Endothelial cell of umbilical vein (primary cell): ENCODE measurements at regions of chr19 and their contacts with region 1.

Region 1: GRCh38 chr19:1039646-1040475 is at the start of gene ABCA7:
- DNase-seq: peak; percentile 98
- H3K4me3 ChIP-seq: peak within 1 kb of the TSS; percentile 6 to 51 (median 51)
- H3K27ac ChIP-seq: no peak within 1 kb of the TSS
- H3K4me1 ChIP-seq: peaks cover 25% of the 10 kb centered on the region
- H3K27me3 ChIP-seq: no peaks in the 10 kb centered on the region
- CTCF ChIP-seq: no peak
- POLR2A ChIP-seq: peak; percentile 44
- total RNA-seq, gene ABCA7: 9.8 and 11.0 TPM in 2 replicates

Region 2: DNA sequence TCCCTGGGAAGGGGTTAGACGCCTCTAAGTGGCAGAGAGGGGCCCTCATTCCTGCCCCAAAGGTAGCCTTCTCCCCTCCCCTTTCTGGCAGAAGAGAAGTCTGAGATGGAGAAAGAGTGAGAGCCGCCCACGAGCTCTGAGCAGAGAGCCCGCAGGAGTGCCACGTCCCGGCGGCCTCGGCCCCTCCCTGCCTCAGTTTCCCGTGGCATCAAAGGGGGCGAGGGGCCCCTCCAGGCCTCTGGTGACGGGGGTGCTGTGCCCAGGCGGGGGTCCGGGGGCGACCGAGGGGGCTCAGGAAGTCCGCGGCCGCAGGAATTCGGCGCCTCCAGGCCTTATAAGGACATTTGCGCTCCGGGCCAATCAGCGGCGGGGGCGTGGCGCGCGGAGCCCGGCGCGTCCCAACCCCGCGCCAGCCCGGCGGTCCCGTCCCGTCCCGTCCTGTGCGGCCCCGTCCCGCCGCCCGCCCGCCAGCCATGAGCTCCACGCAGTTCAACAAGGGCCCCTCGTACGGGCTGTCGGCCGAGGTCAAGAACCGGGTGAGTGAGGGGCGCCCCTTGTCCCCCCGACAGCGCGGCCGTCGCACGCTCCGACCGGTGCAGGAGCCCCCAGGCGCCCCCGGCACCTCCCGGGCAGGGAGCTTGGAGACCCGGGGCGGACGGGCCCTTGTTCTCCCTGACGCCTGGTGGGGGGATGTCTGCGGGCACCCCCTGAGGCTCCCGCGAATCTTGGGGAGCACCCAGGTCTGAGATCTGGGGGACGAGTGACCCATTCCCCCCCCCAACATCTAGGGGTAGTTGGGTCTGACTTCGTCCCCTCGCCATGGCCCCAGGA is 13.5 kb before region 1 on chr19 and contains the start of gene CNN2:
- CTCF ChIA-PET with region 1: interaction called, 8 read pairs
- POLR2A ChIA-PET with region 1: interaction called, 36 read pairs
- dilution Hi-C with region 1: no loop called
- intact Hi-C with region 1: no loop called
- DNase-seq: peak; percentile 80
- H3K4me3 ChIP-seq: peak within 1 kb of the TSS; percentile 52 to 88 (median 84)
- H3K27ac ChIP-seq: peak within 1 kb of the TSS; percentile 70
- H3K4me1 ChIP-seq: peaks cover 9% of the 10 kb centered on the region
- H3K27me3 ChIP-seq: no peaks in the 10 kb centered on the region
- CTCF ChIP-seq: no peak
- POLR2A ChIP-seq: peak; percentile 83
- total RNA-seq, gene CNN2: 280 and 286 TPM in 2 replicates

Region 3: DNA sequence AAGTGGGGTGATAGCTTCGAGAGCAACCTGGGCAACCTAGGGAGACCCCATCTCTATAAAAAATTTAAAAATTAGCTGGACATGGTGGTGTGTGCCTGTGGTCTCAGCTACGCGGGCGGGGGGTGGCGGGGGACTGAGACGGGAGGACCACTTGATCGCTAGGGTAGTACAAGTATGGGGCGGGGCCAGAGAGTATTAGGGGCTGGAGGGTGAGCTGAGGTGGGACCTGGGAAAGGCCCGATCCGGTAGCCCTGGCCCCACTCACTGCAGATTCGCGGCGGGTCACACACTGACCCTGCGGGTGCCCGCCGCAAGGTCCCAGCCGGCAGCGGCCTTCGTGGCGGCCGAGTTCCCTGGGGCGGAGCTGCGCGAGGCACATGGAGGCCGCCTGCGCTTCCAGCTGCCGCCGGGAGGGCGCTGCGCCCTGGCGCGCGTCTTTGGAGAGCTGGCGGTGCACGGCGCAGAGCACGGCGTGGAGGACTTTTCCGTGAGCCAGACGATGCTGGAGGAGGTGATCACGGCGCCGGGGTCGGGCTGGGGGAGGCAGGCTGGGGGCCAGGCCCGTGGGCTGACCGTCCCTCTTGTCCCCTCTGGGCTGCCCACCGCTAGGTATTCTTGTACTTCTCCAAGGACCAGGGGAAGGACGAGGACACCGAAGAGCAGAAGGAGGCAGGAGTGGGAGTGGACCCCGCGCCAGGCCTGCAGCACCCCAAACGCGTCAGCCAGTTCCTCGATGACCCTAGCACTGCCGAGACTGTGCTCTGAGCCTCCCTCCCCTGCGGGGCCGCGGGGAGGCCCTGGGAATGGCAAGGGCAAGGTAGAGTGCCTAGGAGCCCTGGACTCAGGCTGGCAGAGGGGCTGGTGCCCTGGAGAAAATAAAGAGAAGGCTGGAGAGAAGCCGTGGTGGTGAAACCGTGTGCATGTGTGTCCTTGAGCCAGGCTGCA is 25.1 kb after region 1 on chr19:
- CTCF ChIA-PET with region 1: interaction called, 10 read pairs
- POLR2A ChIA-PET with region 1: no interaction called
- dilution Hi-C with region 1: no loop called
- intact Hi-C with region 1: no loop called
- DNase-seq: peak; percentile 55
- H3K4me3 ChIP-seq: no peak overlapping the region
- H3K27ac ChIP-seq: no peak overlapping the region
- H3K4me1 ChIP-seq: peaks cover 31% of the 10 kb centered on the region
- H3K27me3 ChIP-seq: no peaks in the 10 kb centered on the region
- CTCF ChIP-seq: peak; percentile 70 to 82
- POLR2A ChIP-seq: no peak

Region 4: GRCh38 chr19:1094975-1095701 is 55.3 kb after region 1 on chr19 and contains the start of gene POLR2E:
- CTCF ChIA-PET with region 1: no interaction called
- POLR2A ChIA-PET with region 1: no interaction called
- dilution Hi-C with region 1: no loop called
- intact Hi-C with region 1: loop called (anchors 2 kb)
- DNase-seq: peak; percentile 97
- H3K4me3 ChIP-seq: peak within 1 kb of the TSS; percentile 82 to 93 (median 87)
- H3K27ac ChIP-seq: peak within 1 kb of the TSS; percentile 25
- H3K4me1 ChIP-seq: peaks cover 10% of the 10 kb centered on the region
- H3K27me3 ChIP-seq: no peaks in the 10 kb centered on the region
- CTCF ChIP-seq: no peak
- POLR2A ChIP-seq: peak; percentile 81
- total RNA-seq, gene POLR2E: 252 and 272 TPM in 2 replicates